GM12878 (cell line): ENCODE measurements at regions of chr5 and their contacts with region 1.

Region 1: GRCh38 chr5:155943516-155944407 is 383.2 kb upstream of the SGCD start:
- DNase-seq: no peak
- ATAC-seq: peak; percentile 93
- H3K4me3 ChIP-seq: no peak overlapping the region
- H3K27ac ChIP-seq: no peak overlapping the region
- H3K4me1 ChIP-seq: no peaks in the 10 kb centered on the region
- H3K27me3 ChIP-seq: no peaks in the 10 kb centered on the region; a peak in 2 of 4 replicates
- CTCF ChIP-seq: peak; percentile 69 to 79 (median 76)
- EP300 ChIP-seq: no peak
- POLR2A ChIP-seq: no peak
- RAD21 ChIP-seq: peak; percentile 83

Region 2: GRCh38 chr5:155872629-155873220 is 71.0 kb before region 1 on chr5:
- CTCF ChIA-PET with region 1: no interaction called
- POLR2A ChIA-PET with region 1: no interaction called
- RAD21 ChIA-PET with region 1: no interaction called
- SMC1A ChIA-PET with region 1: no interaction called
- in situ Hi-C with region 1: no loop called
- intact Hi-C with region 1: no loop called
- DNase-seq: no peak
- ATAC-seq: no peak
- H3K4me3 ChIP-seq: no peak overlapping the region
- H3K27ac ChIP-seq: no peak overlapping the region
- H3K4me1 ChIP-seq: no peaks in the 10 kb centered on the region
- H3K27me3 ChIP-seq: no peaks in the 10 kb centered on the region
- CTCF ChIP-seq: no peak
- EP300 ChIP-seq: no peak
- POLR2A ChIP-seq: no peak
- RAD21 ChIP-seq: no peak

Region 3: DNA sequence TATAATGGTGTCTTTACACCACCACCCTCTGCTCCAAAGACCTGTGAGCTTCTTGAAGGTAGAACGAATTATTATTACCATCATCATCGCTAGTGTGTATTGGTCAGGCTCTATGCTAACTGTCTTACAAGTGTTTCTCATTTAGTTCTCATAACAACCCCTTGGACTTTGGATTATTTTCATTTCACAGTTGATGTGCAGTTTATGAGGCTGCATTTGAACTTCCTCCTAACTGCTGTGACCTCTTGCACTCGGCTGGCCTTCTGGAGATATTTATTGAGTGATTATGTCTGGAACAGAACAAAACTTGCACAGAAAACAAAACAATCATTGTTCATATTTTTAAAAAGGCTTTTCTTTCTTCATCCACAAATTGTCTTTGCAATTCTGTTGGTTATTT is 76.9 kb after region 1 on chr5:
- CTCF ChIA-PET with region 1: no interaction called
- POLR2A ChIA-PET with region 1: no interaction called
- RAD21 ChIA-PET with region 1: no interaction called
- SMC1A ChIA-PET with region 1: no interaction called
- in situ Hi-C with region 1: no loop called
- intact Hi-C with region 1: no loop called
- DNase-seq: no peak
- ATAC-seq: no peak
- H3K4me3 ChIP-seq: no peak overlapping the region
- H3K27ac ChIP-seq: no peak overlapping the region
- H3K4me1 ChIP-seq: no peaks in the 10 kb centered on the region
- H3K27me3 ChIP-seq: no peaks in the 10 kb centered on the region
- CTCF ChIP-seq: no peak
- EP300 ChIP-seq: no peak
- POLR2A ChIP-seq: no peak
- RAD21 ChIP-seq: no peak

Region 4: DNA sequence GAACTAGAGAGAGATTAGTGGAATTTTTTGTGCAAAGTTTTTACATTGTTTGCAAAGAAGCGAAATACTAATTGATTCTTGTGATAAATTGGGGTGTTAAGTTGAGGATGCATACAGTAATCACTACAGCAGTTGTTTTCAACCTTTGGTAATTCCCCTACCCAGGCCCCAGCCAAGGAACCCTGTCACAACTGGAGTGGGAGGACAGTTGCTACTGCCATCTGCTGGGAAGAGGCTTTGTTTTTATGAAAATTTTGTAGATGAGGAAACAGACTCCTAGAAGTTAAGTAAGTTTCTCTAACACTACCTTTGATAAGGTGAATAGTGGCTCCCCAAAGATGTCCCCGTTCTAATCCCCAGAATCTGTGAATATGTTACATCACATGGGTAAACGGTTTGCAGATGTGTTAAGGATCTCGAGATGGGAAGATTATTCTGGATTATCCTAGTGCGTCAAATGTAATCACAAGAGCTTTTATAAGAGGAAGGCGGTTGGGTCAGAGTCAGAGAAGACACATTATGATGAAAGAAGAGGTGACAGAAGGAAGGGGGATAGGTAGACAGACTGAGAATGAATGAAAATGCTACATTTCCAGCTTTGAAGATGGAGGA is 872.3 kb after region 1 on chr5:
- CTCF ChIA-PET with region 1: interaction called, 4 read pairs
- POLR2A ChIA-PET with region 1: no interaction called
- RAD21 ChIA-PET with region 1: interaction called, 5 read pairs
- SMC1A ChIA-PET with region 1: interaction called, 8 read pairs
- in situ Hi-C with region 1: loop called (anchors 5 kb)
- intact Hi-C with region 1: loop called (anchors 5 kb)
- DNase-seq: no peak
- ATAC-seq: peak; percentile 79
- H3K4me3 ChIP-seq: no peak overlapping the region
- H3K27ac ChIP-seq: no peak overlapping the region
- H3K4me1 ChIP-seq: peaks cover 7% of the 10 kb centered on the region; the same call in 1 of the 2 replicates
- H3K27me3 ChIP-seq: no peaks in the 10 kb centered on the region
- CTCF ChIP-seq: peak; percentile 50 to 71 (median 53)
- EP300 ChIP-seq: no peak
- POLR2A ChIP-seq: no peak
- RAD21 ChIP-seq: peak; percentile 85

Region 5: GRCh38 chr5:156824800-156825199 is 881.0 kb after region 1 on chr5:
- CTCF ChIA-PET with region 1: no interaction called
- POLR2A ChIA-PET with region 1: no interaction called
- RAD21 ChIA-PET with region 1: no interaction called
- SMC1A ChIA-PET with region 1: no interaction called
- in situ Hi-C with region 1: loop called (anchors 5 kb)
- intact Hi-C with region 1: loop called (anchors 5 kb)
- DNase-seq: no peak
- ATAC-seq: no peak
- H3K4me3 ChIP-seq: no peak overlapping the region
- H3K27ac ChIP-seq: no peak overlapping the region
- H3K4me1 ChIP-seq: peaks cover 11% of the 10 kb centered on the region
- H3K27me3 ChIP-seq: no peaks in the 10 kb centered on the region
- CTCF ChIP-seq: peak; percentile 4 to 45 (median 19); a peak in 2 of 6 replicates
- EP300 ChIP-seq: no peak
- POLR2A ChIP-seq: no peak
- RAD21 ChIP-seq: peak; percentile 49